Colonic mucosa (tissue), 4 donors: ENCODE measurements at regions of chr15 and their contacts with region 1.

Region 1: GRCh38 chr15:94238539-94239118 is 7.3 kb downstream of the MCTP2 start:
- DNase-seq: no peak
- H3K4me3 ChIP-seq: no peak overlapping the region
- H3K27ac ChIP-seq: peak overlapping the region; percentile 42
- H3K4me1 ChIP-seq: no peaks in the 10 kb centered on the region
- H3K27me3 ChIP-seq: no peaks in the 10 kb centered on the region
- CTCF ChIP-seq: no peak

Region 2: GRCh38 chr15:94287794-94288246 is 49.2 kb after region 1 on chr15:
- intact Hi-C with region 1: loop called (anchors 5 kb)
- DNase-seq: peak; percentile 29
- H3K4me3 ChIP-seq: no peak overlapping the region
- H3K27ac ChIP-seq: no peak overlapping the region
- H3K4me1 ChIP-seq: no peaks in the 10 kb centered on the region
- H3K27me3 ChIP-seq: no peaks in the 10 kb centered on the region
- CTCF ChIP-seq: no peak